ENCODE measurements at regions of chr12 and their contacts with region 1.

Region 1: GRCh38 chr12:52121824-52122539 is 42.5 kb downstream of the SMIM41 start:
- DNase-seq: peak; percentile 15
- H3K4me3 ChIP-seq: no peak overlapping the region
- H3K27ac ChIP-seq: peak overlapping the region; percentile 47
- H3K27me3 ChIP-seq: peaks cover 13% of the 10 kb centered on the region
- CTCF ChIP-seq: peak; percentile 75

Region 2: DNA sequence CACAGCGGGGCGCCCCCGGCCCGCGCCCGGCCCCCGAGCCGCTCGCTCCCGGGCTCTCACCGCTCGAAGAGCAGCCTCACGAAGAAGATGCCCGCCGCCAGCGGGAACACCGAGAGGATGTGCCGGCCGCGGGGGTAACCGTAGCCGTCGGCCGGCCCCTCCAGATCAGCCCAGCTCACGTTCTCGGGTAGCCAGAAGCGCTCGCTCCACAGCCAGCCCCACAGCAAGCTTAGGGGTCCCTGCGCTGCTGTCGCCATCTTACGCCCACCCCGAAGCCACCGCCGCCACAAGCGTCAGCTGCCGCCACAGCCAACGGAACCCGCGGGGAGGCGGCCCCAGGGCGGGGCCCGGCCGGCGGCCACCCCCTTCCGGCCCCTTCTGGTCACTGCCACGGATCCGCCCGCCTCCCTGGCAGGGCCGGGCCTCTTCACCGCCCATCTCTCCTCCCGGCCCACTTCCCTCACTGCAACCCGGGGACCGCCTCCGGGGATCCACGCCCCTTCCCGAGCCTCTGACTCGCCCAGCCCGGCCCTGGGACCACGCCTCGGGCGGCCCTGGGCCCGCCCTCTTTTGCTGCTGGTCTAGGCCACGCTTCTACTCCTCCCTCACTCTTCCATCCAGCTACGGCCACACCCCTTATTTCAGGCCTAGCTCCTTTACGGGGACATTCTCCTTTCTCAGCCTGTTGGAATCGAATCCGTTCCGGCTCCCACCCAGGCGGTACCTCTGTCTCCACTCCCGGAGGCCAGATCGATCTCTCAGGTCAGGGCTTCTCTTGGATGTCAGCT is 1954.7 kb before region 1 on chr12 and contains the start of gene CERS5:
- CTCF ChIA-PET with region 1: interaction called, 14 read pairs
- POLR2A ChIA-PET with region 1: no interaction called
- DNase-seq: peak; percentile 96
- H3K4me3 ChIP-seq: peak within 1 kb of the TSS; percentile 87
- H3K27ac ChIP-seq: peak within 1 kb of the TSS; percentile 89
- H3K27me3 ChIP-seq: no peaks in the 10 kb centered on the region
- CTCF ChIP-seq: no peak
- polyA plus RNA-seq, gene CERS5: 76.1 and 83.3 TPM in 2 replicates

Region 3: DNA sequence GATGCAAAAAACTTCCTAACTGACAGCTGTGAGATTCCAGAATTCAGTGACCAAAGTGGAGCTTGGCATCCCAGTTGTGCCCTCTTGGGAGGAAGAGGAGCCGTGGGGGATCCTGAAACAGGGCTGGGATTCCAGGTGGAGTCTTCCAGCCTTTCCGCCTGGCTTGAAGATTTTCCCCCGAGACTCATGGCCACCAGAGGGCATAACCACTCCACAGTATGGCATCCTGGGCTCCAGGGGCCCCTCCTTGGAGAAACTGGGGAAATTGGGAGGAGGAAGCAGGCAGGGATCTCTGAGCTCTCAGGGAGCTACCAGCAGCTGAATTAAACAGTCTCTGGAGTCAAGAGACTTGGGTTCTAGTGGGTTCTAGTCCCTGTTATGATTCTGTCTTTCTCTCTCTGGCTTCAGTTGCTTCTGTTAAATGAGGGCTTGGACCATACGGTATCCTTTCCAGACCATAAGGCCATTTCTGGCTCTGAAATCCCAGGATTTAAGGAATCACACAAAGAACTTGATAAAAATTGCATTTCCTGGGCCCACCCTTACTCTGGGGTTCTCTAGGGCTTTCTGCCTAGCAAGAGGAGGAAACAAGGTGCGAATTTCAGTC is 117.8 kb before region 1 on chr12:
- CTCF ChIA-PET with region 1: interaction called, 17 read pairs
- POLR2A ChIA-PET with region 1: no interaction called
- DNase-seq: no peak
- H3K4me3 ChIP-seq: no peak overlapping the region
- H3K27ac ChIP-seq: no peak overlapping the region
- H3K27me3 ChIP-seq: peaks cover 6% of the 10 kb centered on the region
- CTCF ChIP-seq: peak; percentile 83

Region 4: DNA sequence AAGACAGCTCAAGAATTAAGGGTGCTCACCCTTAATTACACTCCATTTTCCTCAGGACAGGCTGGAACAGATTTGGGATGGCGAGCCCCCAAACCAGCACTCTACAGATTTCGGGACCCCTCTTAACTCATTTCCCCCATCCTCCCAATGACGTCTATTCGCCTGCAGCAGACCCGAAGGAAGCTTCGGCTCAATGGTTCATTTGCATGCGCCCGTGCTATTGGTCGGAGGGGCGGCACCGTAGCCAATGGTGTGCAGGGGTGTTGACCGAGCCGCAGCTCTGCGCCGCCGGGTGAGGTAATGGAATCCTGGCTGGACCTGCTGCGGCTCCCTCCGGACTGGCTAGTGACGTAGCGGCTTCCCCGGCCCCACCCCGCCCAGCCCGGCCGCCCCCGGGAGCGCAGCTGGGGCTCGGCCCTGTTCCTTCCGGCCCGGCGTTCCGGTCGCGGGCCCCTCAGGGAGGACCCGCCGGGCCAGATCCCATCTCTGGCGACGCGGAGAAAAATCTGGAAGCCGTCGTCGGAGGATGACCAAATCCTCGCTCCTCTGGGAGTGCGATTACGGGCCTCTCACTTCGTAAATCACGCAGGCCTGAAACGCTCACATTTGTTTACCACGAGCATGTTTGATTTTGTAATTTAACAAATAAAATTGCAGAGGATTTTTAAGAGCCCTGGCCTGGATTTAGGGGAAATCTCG is 89.0 kb before region 1 on chr12:
- CTCF ChIA-PET with region 1: interaction called, 228 read pairs
- POLR2A ChIA-PET with region 1: no interaction called
- DNase-seq: peak; percentile 88
- H3K4me3 ChIP-seq: peak overlapping the region; percentile 53
- H3K27ac ChIP-seq: peak overlapping the region; percentile 82
- H3K27me3 ChIP-seq: no peaks in the 10 kb centered on the region
- CTCF ChIP-seq: no peak

Measured in AG04450 (cell line).